Left lung (tissue), 14 donors: ENCODE measurements at regions of chr2 and their contacts with region 1.

Region 1: DNA sequence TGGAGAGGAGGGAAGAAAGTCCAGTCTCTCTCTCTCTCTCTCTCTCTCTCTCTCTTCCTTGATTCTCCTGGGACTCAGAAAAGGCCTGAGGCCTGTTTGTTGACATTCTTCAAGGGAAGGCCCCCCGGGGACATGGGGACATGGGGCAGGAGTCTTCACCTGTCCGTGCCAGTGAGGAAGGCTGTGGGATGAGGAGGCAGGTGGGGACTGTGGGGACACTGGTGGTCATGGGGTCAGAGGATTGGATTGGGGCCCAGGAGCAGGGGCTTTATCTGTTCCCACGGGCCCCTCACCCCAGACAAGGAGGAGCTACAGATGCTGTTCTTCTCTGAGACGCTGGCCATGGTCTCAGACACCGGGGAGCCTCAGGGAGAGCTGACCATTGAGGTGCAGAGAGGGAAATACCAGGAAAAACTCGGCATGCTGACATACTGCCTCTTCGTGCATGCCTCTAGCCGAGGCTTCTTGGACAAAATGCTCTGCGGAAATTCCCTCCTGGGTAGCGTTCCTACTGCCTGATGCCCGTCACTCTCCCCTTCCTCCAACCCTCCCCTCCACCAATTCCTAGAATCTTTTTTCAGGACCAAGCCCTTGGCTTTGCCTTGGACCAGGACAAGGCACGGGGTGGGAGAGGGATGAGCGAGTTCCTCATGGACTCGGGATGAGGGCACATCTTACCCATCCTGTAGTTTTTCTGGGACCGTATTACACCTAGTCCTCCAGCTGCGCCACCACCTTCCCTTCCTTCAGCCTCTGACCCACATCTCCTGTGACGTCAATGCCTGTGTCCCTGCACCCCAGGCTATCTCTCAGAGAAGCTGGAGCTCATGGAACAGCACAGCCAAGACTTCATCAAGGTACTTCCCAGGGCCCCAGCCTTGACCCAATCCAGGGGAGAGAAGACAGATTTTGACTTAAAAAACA is 841 bp downstream of the CATIP start:
- DNase-seq: no peak
- ATAC-seq: no peak
- H3K4me3 ChIP-seq: no peak overlapping the region
- H3K27ac ChIP-seq: peak overlapping the region in 1 of 2 donors; percentile 43
- H3K4me1 ChIP-seq: peaks cover 5 to 46% of the 10 kb centered on the region in 2 donors
- H3K27me3 ChIP-seq: no peaks in the 10 kb centered on the region
- CTCF ChIP-seq: no peak

Region 2: GRCh38 chr2:218301176-218301819 is 56.2 kb before region 1 on chr2:
- intact Hi-C with region 1: loop called in 1 of 2 experiments (anchors 2 kb)
- DNase-seq: peak in 3 of 4 donors; percentile 71 to 89 (median 85)
- ATAC-seq: peak; percentile 94
- H3K4me3 ChIP-seq: no peak overlapping the region
- H3K27ac ChIP-seq: no peak overlapping the region
- H3K4me1 ChIP-seq: peaks cover 0 to 11% of the 10 kb centered on the region in 2 donors
- H3K27me3 ChIP-seq: no peaks in the 10 kb centered on the region
- CTCF ChIP-seq: peak; percentile 98

Region 3: GRCh38 chr2:218471982-218472381 is 114.5 kb after region 1 on chr2:
- intact Hi-C with region 1: no loop called
- DNase-seq: no peak
- ATAC-seq: peak; percentile 63
- H3K4me3 ChIP-seq: no peak overlapping the region
- H3K27ac ChIP-seq: peak overlapping the region in 1 of 2 donors; percentile 55
- H3K4me1 ChIP-seq: peaks cover 0 to 28% of the 10 kb centered on the region in 2 donors
- H3K27me3 ChIP-seq: no peaks in the 10 kb centered on the region
- CTCF ChIP-seq: no peak